Heart right ventricle (tissue), 16 donors: ENCODE measurements at regions of chr11 and their contacts with region 1.

Region 1: DNA sequence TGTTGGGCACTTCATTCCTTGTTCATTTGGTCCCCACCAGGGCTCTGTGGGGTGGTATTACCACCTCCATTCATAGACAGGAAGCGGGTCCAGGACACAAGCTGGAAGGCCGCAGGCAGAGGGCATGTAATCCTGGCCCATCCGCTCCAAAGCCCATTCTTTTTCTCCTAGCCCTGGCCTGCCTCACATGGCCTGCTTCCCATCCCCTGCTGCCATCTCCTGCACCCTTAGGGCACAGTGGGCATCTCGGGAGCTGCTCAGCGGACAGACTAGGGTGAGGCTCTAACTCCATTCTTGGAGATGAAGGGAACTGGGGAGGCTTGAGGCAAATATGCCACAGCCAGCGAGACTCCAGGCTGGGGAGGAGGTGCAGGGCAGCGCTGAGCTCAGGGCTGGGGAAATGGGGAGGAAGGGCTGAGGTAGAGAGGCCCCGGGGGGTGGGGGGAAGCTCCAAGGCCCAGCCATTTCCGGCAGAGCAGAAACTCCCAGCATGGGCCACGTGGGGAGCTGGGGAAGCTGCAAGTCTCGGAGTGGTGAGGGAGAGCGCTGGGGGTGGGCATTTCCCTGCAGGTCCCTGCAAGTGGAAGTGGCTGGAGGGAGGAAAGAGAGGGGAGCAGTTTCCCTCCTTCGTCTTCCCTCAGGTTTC is 14.3 kb upstream of the BCL9L start:
- DNase-seq: no peak
- ATAC-seq: peak in 7 of 8 donors; percentile 27 to 67 (median 49)
- H3K4me3 ChIP-seq: no peak overlapping the region
- H3K27ac ChIP-seq: no peak overlapping the region
- H3K4me1 ChIP-seq: peaks cover 0 to 11% (median 0%) of the 10 kb centered on the region in 9 donors
- H3K27me3 ChIP-seq: peaks cover 0 to 9% (median 4%) of the 10 kb centered on the region in 7 donors
- CTCF ChIP-seq: no peak

Region 2: GRCh38 chr11:118895142-118896039 is 44.7 kb before region 1 on chr11:
- intact Hi-C with region 1: loop called in 3 of 10 experiments (anchors 5 kb)
- DNase-seq: peak in 1 of 2 donors; percentile 3
- ATAC-seq: no peak
- H3K4me3 ChIP-seq: no peak overlapping the region
- H3K27ac ChIP-seq: peak overlapping the region in 1 of 10 donors; percentile 55
- H3K4me1 ChIP-seq: peaks cover 0 to 33% (median 0%) of the 10 kb centered on the region in 9 donors
- H3K27me3 ChIP-seq: no peaks in the 10 kb centered on the region
- CTCF ChIP-seq: no peak

Region 3: GRCh38 chr11:118901494-118902335 is 38.4 kb before region 1 on chr11:
- intact Hi-C with region 1: loop called in 2 of 10 experiments (anchors 5 kb)
- DNase-seq: no peak
- ATAC-seq: peak in 1 of 8 donors; percentile 3
- H3K4me3 ChIP-seq: no peak overlapping the region
- H3K27ac ChIP-seq: no peak overlapping the region
- H3K4me1 ChIP-seq: peaks cover 0 to 27% (median under 1%) of the 10 kb centered on the region in 9 donors
- H3K27me3 ChIP-seq: no peaks in the 10 kb centered on the region
- CTCF ChIP-seq: peak in 2 of 9 donors; percentile 6 to 17

Region 4: GRCh38 chr11:118918128-118918685 is 21.9 kb before region 1 on chr11:
- intact Hi-C with region 1: no loop called
- DNase-seq: peak; percentile 75 to 80
- ATAC-seq: peak; percentile 1 to 31 (median 19)
- H3K4me3 ChIP-seq: peak overlapping the region in 9 of 10 donors; percentile 19 to 41 (median 30)
- H3K27ac ChIP-seq: peak overlapping the region; percentile 83 to 98 (median 94)
- H3K4me1 ChIP-seq: peaks cover 83 to 99% (median 98%) of the 10 kb centered on the region in 9 donors
- H3K27me3 ChIP-seq: no peaks in the 10 kb centered on the region
- CTCF ChIP-seq: no peak